ENCODE measurements at regions of chr10 and their contacts with region 1.

Region 1: DNA sequence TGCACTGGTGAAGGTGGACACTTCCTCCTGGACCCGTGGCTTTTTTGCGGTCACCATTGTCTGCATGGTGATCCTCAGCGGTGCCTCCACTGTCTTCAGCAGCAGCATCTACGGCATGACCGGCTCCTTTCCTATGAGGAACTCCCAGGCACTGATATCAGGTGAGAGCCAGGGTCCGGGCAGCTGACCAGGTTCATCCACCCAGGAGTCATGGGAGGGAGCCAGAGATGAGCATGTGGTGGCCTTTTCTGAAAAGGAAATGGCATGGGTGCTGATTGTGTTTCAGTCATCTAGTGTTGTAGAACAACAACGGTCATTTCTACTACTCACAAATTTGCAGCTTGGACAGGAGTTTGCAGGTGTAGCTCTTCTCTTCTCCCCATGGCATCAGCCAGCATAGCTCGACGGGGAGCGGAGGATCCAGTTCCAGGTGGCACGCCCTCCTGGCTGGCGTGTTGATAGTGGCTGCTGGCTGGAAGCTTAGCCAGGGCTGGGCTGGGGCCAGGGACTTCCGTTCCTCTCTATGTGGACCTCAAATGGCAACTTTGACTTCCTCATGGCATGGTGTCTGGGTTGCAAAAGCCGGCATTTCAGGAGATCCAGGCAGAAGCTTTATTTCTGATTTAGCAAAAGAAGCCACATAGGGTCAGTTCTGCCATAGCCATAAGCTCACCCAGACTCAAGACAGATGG is 32.7 kb downstream of the SLC29A3 start:
- DNase-seq: no peak
- H3K4me3 Mint-ChIP-seq: no peak overlapping the region
- H3K27ac Mint-ChIP-seq: no peak overlapping the region
- H3K4me1 Mint-ChIP-seq: peaks cover 25% of the 10 kb centered on the region
- H3K27me3 Mint-ChIP-seq: no peaks in the 10 kb centered on the region
- CTCF ChIP-seq: no peak

Region 2: GRCh38 chr10:71339799-71340589 is 11.8 kb before region 1 on chr10:
- CTCF ChIA-PET with region 1: interaction called, 3 read pairs
- POLR2A ChIA-PET with region 1: interaction called, 23 read pairs
- intact Hi-C with region 1: no loop called
- DNase-seq: peak; percentile 65
- H3K4me3 Mint-ChIP-seq: peak overlapping the region; percentile 31
- H3K27ac Mint-ChIP-seq: peak overlapping the region; percentile 84
- H3K4me1 Mint-ChIP-seq: peaks cover 36% of the 10 kb centered on the region
- H3K27me3 Mint-ChIP-seq: no peaks in the 10 kb centered on the region
- CTCF ChIP-seq: no peak

Region 3: DNA sequence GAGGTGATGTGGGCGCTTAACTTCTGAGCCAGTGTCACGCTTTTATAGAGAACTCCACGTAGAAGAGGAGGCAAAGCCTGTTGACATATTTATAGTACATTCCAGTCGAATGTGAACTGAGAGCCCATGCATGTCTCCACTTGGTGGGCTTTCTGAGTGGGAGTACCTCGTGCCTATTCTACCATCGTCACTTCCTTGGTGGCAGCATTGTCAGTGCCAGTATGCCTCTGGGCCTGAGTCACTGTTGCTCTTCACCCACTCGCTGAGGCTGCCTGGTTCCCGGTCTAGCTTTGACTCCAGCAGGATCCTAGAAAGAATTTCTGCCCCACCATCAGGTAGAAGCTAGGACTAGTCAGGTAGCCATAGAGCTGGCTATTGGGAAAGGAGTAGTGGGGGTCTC is 14.9 kb after region 1 on chr10:
- CTCF ChIA-PET with region 1: interaction called, 5 read pairs
- POLR2A ChIA-PET with region 1: interaction called, 22 read pairs
- intact Hi-C with region 1: loop called (anchors 1 kb)
- DNase-seq: no peak
- H3K4me3 Mint-ChIP-seq: no peak overlapping the region
- H3K27ac Mint-ChIP-seq: no peak overlapping the region
- H3K4me1 Mint-ChIP-seq: peaks cover 21% of the 10 kb centered on the region
- H3K27me3 Mint-ChIP-seq: no peaks in the 10 kb centered on the region
- CTCF ChIP-seq: no peak